ENCODE measurements at regions of chr2 and their contacts with region 1.

Region 1: GRCh38 chr2:121649596-121650314 is 493 bp upstream of the CLASP1 start:
- DNase-seq: peak; percentile 92 to 99
- ATAC-seq: peak; percentile 89 to 97 (median 93)
- H3K4me3 ChIP-seq: peak overlapping the region; percentile 88
- H3K4me3 Mint-ChIP-seq: peak overlapping the region; percentile 100
- H3K27ac ChIP-seq: peak overlapping the region; percentile 99
- H3K27ac Mint-ChIP-seq: peak overlapping the region; percentile 99 to 100
- H3K4me1 ChIP-seq: peaks cover 17% of the 10 kb centered on the region
- H3K4me1 Mint-ChIP-seq: peaks cover 61 to 72% of the 10 kb centered on the region in 2 donors
- H3K27me3 ChIP-seq: no peaks in the 10 kb centered on the region
- H3K27me3 Mint-ChIP-seq: no peaks in the 10 kb centered on the region
- CTCF ChIP-seq: no peak

Region 2: DNA sequence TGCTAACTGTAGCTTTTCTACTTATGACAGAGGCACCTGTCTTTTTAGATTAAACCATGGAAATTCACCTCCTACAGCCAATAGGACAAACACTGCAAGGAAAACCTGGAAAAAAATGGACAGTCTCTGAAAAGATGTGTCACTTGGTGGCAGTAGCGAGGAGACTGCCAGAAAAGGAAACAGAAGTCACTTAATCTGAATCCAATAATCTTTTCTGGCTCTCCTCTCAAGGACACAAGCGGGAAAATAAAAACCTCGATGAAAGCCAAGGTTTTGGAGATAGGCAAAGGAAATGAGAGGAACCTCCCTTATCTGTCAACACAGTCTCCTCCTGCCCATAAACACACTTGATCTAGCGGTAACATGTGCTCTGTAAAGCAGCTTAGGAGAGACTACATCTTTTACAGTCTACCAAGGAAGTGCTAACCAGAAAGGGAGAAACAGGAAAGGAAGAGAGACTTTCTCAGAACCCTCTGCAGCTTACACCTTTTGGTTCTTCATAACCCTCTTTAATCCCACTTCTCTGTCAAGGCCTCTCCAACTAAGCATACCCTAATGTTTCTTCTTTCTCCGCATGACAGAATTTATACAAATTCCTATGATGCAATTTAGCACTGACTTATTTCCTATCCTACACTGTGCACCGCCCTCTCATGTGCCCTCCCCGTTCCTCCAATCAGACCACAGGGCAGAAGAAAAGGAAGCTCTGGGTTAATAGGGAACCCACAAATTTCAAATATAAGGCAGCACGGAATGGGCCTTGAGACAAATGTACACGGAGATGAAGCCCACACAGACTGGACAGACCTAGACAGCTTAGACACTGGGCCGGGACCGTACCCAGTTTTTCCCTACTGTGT is 53.3 kb before region 1 on chr2:
- intact Hi-C with region 1: loop called (anchors 5 kb)
- DNase-seq: peak in 1 of 2 donors; percentile 37
- ATAC-seq: peak; percentile 79 to 87 (median 86)
- H3K4me3 ChIP-seq: no peak overlapping the region
- H3K4me3 Mint-ChIP-seq: peak overlapping the region; percentile 79
- H3K27ac ChIP-seq: peak overlapping the region; percentile 54
- H3K27ac Mint-ChIP-seq: peak overlapping the region; percentile 74 to 89
- H3K4me1 ChIP-seq: peaks cover 7% of the 10 kb centered on the region
- H3K4me1 Mint-ChIP-seq: peaks cover 40 to 56% of the 10 kb centered on the region in 2 donors
- H3K27me3 ChIP-seq: no peaks in the 10 kb centered on the region
- H3K27me3 Mint-ChIP-seq: no peaks in the 10 kb centered on the region
- CTCF ChIP-seq: no peak

Region 3: DNA sequence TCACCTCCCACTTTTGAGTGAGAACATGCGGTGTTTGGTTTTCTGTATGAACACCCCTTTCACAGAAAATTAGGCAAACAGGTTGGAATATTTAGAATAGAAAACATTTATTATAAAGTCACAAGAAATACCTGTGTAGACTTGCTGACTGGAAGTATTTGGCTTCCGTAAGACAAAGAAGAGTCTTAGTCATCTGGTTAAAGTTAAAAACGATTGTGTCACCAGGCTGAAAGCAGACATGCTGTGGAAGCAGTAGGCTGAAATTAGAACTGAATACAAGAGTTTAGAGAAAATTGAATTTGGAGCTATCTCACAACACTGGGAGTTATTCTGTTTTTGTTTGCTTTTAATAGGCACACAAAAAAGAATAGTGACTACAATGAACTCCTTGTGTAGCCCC is 15.7 kb after region 1 on chr2:
- intact Hi-C with region 1: no loop called
- DNase-seq: no peak
- ATAC-seq: no peak
- H3K4me3 ChIP-seq: no peak overlapping the region
- H3K4me3 Mint-ChIP-seq: no peak overlapping the region
- H3K27ac ChIP-seq: no peak overlapping the region
- H3K27ac Mint-ChIP-seq: no peak overlapping the region
- H3K4me1 ChIP-seq: no peaks in the 10 kb centered on the region
- H3K4me1 Mint-ChIP-seq: no peaks in the 10 kb centered on the region
- H3K27me3 ChIP-seq: no peaks in the 10 kb centered on the region
- H3K27me3 Mint-ChIP-seq: no peaks in the 10 kb centered on the region
- CTCF ChIP-seq: no peak

Region 4: DNA sequence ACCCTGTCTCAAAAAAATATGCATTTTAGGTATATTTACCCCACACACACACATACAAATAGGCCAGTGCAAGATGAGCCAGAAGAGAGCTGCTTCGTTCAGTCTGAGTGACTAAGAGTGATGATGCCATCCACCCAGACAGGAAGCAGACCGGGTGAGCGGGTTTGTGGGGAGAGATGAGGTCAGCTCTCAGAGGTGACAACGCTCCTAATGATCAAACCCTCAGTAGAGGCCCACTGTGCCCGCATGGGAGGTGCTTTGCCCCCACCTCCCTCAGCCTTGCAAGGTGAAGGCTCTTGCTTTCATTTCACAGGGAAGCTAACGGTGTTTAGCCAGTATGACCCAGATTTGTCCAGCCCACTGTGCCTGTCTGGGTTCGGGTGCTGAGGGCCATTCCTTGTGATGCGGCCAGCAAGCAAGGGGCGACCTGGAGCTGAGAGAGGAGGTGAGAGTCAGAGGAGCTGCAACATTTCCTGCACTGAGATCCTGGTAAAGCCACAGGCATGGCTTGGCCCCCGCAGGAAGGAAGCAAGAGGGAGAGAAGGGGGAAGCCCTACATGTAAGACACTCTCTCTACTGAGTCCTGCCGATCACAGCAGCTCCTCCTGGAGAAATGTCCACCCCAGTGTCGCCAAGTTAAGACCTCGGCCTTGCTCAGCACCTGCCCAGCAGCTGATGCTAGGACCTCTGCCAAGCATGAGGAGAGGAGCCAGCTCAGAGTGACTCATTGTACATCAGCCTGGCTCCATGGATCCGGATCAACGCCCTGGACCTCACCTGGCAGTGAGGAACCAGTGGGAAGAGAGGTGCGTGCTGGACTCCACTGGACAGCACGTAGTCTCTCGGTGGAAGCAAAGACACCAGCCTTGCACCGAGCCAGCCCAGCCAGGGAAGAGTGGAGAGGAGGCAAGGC is 49.9 kb after region 1 on chr2:
- intact Hi-C with region 1: loop called (anchors 1 kb)
- DNase-seq: peak; percentile 86 to 92
- ATAC-seq: peak; percentile 86 to 95 (median 91)
- H3K4me3 ChIP-seq: peak overlapping the region; percentile 25
- H3K4me3 Mint-ChIP-seq: peak overlapping the region; percentile 95
- H3K27ac ChIP-seq: peak overlapping the region; percentile 88
- H3K27ac Mint-ChIP-seq: peak overlapping the region; percentile 97
- H3K4me1 ChIP-seq: peaks cover 29% of the 10 kb centered on the region
- H3K4me1 Mint-ChIP-seq: peaks cover 37 to 39% of the 10 kb centered on the region in 2 donors
- H3K27me3 ChIP-seq: no peaks in the 10 kb centered on the region
- H3K27me3 Mint-ChIP-seq: no peaks in the 10 kb centered on the region
- CTCF ChIP-seq: no peak

Region 5: DNA sequence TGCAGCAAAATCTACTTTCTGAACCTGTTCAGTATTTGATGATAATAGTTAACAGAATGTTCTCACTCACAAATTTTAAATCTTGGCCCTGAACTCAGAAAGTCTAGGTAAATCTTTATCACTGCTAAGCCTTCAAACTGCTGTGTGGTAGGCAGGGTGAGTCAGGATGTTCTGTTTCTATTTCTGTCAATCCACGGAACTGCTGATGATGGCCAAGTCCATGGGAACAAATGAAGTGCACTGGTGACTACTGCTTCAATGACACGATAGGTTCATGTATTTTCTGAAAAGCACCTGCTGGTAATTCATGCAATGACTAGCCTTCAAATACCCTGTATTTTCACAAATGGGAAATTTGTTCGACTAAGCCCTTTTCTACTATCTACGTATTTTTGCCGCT is 72.7 kb after region 1 on chr2:
- intact Hi-C with region 1: loop called (anchors 5 kb)
- DNase-seq: no peak
- ATAC-seq: no peak
- H3K4me3 ChIP-seq: no peak overlapping the region
- H3K4me3 Mint-ChIP-seq: no peak overlapping the region
- H3K27ac ChIP-seq: no peak overlapping the region
- H3K27ac Mint-ChIP-seq: no peak overlapping the region
- H3K4me1 ChIP-seq: peaks cover 8% of the 10 kb centered on the region
- H3K4me1 Mint-ChIP-seq: peaks cover 5% of the 10 kb centered on the region in 2 donors
- H3K27me3 ChIP-seq: no peaks in the 10 kb centered on the region
- H3K27me3 Mint-ChIP-seq: no peaks in the 10 kb centered on the region
- CTCF ChIP-seq: no peak

Region 6: GRCh38 chr2:121736462-121737341 is 86.9 kb after region 1 on chr2 and contains the start of gene NIFK:
- intact Hi-C with region 1: loop called (anchors 1 kb)
- DNase-seq: peak; percentile 98 to 99
- ATAC-seq: peak; percentile 89 to 97 (median 90)
- H3K4me3 ChIP-seq: peak within 1 kb of the TSS; percentile 85
- H3K4me3 Mint-ChIP-seq: peak within 1 kb of the TSS; percentile 99
- H3K27ac ChIP-seq: peak within 1 kb of the TSS; percentile 76
- H3K27ac Mint-ChIP-seq: peak within 1 kb of the TSS; percentile 96 to 98
- H3K4me1 ChIP-seq: peaks cover 23% of the 10 kb centered on the region
- H3K4me1 Mint-ChIP-seq: peaks cover 35 to 48% of the 10 kb centered on the region in 2 donors
- H3K27me3 ChIP-seq: no peaks in the 10 kb centered on the region
- H3K27me3 Mint-ChIP-seq: no peaks in the 10 kb centered on the region
- CTCF ChIP-seq: no peak
- total RNA-seq, gene NIFK: 32.7 to 37.7 (median 33.5) TPM

Region 7: DNA sequence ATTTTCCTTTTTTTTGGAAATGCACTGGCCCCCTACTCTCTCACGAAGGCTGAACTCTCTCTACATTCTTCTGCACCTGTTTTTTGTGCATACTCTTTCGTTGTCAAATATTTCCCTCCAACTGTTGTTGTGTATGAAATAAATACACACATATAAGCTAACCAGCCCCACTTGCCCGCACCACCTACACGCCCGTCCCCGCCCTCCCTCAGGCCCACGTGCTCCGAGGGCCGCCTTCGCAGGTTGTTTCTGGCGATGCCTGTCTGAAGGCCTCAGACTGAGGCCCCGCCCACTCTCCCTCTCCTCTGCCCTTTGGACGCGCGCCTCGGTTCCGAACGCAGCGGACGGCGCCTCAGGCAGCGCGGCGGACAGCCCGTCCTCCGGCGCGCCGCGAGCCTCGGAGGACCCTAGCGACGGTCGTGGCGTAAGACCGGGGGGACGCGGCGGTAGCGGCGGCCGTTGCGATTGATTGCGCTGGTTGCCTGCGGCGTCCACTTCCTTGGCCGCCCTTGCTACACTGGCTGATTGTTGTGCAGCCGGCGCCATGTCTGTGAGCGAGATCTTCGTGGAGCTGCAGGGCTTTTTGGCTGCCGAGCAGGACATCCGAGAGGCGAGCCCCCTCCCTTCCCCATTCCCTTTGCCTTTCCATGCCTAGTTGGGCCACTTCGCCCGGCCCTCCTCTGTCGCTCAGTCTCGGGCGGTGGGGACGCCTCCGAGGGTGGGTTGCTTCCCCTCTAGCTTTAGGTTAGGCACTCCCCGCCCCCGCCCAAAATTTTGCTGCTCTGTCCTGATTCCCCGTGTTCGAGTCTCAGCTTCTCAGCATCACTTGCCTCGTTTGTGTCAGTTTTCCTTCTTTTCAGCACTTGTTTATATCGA is 105.7 kb after region 1 on chr2 and contains the start of gene TSN:
- intact Hi-C with region 1: loop called (anchors 5 kb)
- DNase-seq: peak; percentile 96 to 99
- ATAC-seq: peak; percentile 97 to 100 (median 98)
- H3K4me3 ChIP-seq: peak within 1 kb of the TSS; percentile 94
- H3K4me3 Mint-ChIP-seq: peak within 1 kb of the TSS; percentile 91
- H3K27ac ChIP-seq: peak within 1 kb of the TSS; percentile 75
- H3K27ac Mint-ChIP-seq: peak within 1 kb of the TSS; percentile 78 to 84
- H3K4me1 ChIP-seq: peaks cover 5% of the 10 kb centered on the region
- H3K4me1 Mint-ChIP-seq: peaks cover 19 to 25% of the 10 kb centered on the region in 2 donors
- H3K27me3 ChIP-seq: no peaks in the 10 kb centered on the region
- H3K27me3 Mint-ChIP-seq: no peaks in the 10 kb centered on the region
- CTCF ChIP-seq: no peak
- total RNA-seq, gene TSN: 54.7 to 66.9 (median 62.5) TPM

Region 8: GRCh38 chr2:122390406-122390805 is 740.7 kb after region 1 on chr2:
- intact Hi-C with region 1: no loop called
- DNase-seq: no peak
- ATAC-seq: no peak
- H3K4me3 ChIP-seq: no peak overlapping the region
- H3K4me3 Mint-ChIP-seq: no peak overlapping the region
- H3K27ac ChIP-seq: no peak overlapping the region
- H3K27ac Mint-ChIP-seq: no peak overlapping the region
- H3K4me1 ChIP-seq: no peaks in the 10 kb centered on the region
- H3K4me1 Mint-ChIP-seq: no peaks in the 10 kb centered on the region
- H3K27me3 ChIP-seq: no peaks in the 10 kb centered on the region
- H3K27me3 Mint-ChIP-seq: no peaks in the 10 kb centered on the region
- CTCF ChIP-seq: no peak

Measured in natural killer cell (primary cell).